ENCODE measurements at regions of chr19 and their contacts with region 1.

Region 1: GRCh38 chr19:9834726-9835506 is at the start of gene PIN1:
- DNase-seq: peak; percentile 91
- H3K4me3 ChIP-seq: peak within 1 kb of the TSS; percentile 94
- H3K27me3 ChIP-seq: no peaks in the 10 kb centered on the region
- CTCF ChIP-seq: peak; percentile 50
- polyA plus RNA-seq, gene PIN1: 56.4 and 89.6 TPM in 2 replicates

Region 2: DNA sequence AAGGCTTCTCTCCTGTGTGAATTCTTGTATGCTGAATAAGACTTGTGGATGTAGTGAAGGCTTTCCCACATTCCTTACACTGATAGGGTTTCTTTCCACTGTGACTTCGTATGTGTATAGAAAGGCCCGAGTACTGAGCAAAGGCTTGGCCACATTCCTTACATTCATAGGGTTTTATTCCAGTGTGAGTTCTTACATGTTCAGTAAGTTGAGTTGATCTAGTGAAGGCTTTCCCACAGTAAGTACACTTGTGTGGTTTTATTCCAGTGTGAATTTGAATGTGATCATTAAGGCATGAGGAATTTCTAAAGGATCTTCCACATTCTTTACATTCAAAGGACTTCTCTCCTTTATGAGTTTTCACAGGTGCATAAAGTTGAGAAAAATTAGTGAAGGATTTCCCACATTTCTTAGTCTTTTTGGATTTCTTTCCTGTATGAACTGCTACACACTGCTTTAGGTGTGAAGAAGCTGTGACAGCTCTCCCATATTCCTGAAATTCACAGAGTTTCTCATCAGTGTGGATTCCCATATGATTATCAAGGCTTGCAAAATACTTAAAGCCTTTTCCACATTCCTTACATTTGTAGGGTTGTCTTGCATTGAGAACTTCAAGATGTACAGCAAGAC is 224.3 kb before region 1 on chr19:
- CTCF ChIA-PET with region 1: no interaction called
- POLR2A ChIA-PET with region 1: interaction called, 11 read pairs
- DNase-seq: no peak
- H3K4me3 ChIP-seq: no peak overlapping the region
- H3K27me3 ChIP-seq: no peaks in the 10 kb centered on the region
- CTCF ChIP-seq: no peak

Region 3: GRCh38 chr19:9906475-9907087 is 71.7 kb after region 1 on chr19:
- CTCF ChIA-PET with region 1: no interaction called
- POLR2A ChIA-PET with region 1: no interaction called
- DNase-seq: no peak
- H3K4me3 ChIP-seq: no peak overlapping the region
- H3K27me3 ChIP-seq: peaks cover 4% of the 10 kb centered on the region
- CTCF ChIP-seq: no peak

Measured in BJ (cell line).